Activated CD4-positive, alpha-beta T cell treated with anti-CD3 and anti-CD28 coated beads, Interleukin-2, amount 10 ng/mL, durations not matched to agents 24 days and 14 days (primary cell): ENCODE measurements at regions of chrX and their contacts with region 1.

Region 1: DNA sequence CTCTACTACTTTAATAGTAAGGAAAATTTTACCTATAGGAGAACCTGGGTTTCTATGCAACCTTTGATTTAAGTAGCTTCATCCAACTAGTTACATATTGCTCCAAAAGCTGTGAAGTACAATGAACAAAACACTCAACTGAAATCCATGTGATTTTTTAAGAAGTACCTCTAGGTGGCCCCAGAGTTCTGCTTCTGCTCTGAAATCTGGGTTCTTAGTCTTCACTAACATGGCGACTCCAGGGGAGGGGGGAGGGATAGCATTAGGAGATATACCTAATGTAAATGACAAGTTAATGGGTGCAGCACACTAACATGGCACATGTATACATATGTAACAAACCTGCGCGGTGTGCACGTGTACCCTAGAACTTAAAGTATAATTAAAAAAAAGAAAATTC is 73.4 kb upstream of the MAGEB2 start:
- DNase-seq: no peak
- H3K4me3 Mint-ChIP-seq: no peak overlapping the region
- H3K27ac Mint-ChIP-seq: no peak overlapping the region
- H3K4me1 Mint-ChIP-seq: no peaks in the 10 kb centered on the region
- H3K27me3 Mint-ChIP-seq: no peaks in the 10 kb centered on the region

Region 2: DNA sequence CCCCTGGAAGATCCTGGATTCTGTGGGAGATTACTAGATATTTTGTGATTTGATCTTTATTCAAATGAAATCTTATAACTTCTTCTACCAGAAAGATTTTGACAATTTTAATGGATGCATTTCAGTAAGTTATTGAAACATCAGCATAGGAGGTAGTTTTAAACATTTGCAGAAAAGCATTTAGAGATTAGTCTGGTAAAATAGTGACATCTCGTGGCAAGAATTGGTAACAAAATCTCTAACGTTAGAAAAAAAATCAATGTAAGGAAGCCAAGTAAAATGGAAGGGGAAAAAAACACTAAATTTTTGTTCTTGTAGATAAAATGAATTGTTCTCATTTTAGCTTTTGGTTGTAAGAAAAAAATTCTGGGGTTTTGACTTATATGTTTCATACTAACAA is 362.3 kb after region 1 on chrX:
- intact Hi-C with region 1: loop called (anchors 10 kb)
- DNase-seq: no peak
- H3K4me3 Mint-ChIP-seq: no peak overlapping the region
- H3K27ac Mint-ChIP-seq: no peak overlapping the region
- H3K4me1 Mint-ChIP-seq: no peaks in the 10 kb centered on the region
- H3K27me3 Mint-ChIP-seq: peaks cover 10% of the 10 kb centered on the region

Region 3: DNA sequence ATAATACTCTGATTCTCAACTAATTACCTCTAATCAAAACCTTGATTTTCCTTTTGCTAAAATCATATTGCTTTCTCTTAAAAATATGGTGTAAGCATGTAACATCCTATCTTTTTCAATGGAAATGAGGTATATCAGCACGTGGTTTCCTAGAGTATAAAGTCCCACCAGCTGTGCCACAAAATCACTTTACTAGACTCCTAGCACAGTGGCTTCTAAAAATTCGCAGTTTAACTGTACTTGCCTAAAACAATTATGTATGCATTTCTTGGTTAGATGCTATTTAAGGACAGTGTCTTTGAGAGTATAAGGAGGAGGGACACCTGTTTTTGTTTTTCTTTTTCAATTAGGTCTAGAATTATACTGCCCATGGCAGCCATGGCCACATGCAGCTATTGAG is 574.0 kb after region 1 on chrX:
- intact Hi-C with region 1: no loop called
- DNase-seq: no peak
- H3K4me3 Mint-ChIP-seq: no peak overlapping the region
- H3K27ac Mint-ChIP-seq: no peak overlapping the region
- H3K4me1 Mint-ChIP-seq: peaks cover 30% of the 10 kb centered on the region
- H3K27me3 Mint-ChIP-seq: no peaks in the 10 kb centered on the region